CD4-positive, alpha-beta memory T cell (primary cell): ENCODE measurements at regions of chr12 and their contacts with region 1.

Region 1: DNA sequence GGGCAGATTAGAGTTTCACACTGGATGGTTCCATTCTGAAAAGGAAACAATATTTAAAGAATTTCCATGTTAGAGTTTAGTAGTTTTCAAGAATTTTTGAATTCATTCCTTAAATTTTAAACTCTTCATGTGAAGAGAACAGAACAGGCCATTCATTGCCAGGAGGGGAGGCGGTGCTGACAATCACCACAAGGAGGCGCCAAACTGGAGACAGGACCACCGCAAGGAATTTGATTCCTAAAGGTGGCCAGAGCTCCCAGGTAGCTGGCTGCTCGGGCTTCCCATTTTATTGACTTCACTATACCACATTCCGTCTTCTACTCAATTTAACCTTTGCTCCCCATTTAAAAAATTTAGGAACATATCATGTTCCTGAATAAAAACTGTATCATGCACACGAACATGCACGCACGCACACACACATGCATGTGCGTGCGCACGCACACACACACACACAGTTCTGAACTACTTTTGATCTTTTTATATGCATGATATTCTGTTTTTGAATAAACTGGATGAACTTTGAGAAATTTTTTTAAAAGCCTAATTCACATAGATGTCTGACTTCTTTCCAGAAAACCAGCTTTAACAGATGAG is 101.2 kb downstream of the NELL2 start:
- DNase-seq: peak; percentile 44 to 54 (median 44)
- H3K4me3 ChIP-seq: no peak overlapping the region
- H3K4me3 Mint-ChIP-seq: no peak overlapping the region
- H3K27ac ChIP-seq: no peak overlapping the region
- H3K27ac Mint-ChIP-seq: peak overlapping the region in 2 of 7 donors; percentile 20 to 74
- H3K4me1 ChIP-seq: no peaks in the 10 kb centered on the region
- H3K4me1 Mint-ChIP-seq: peaks cover 0 to 4% (median 2%) of the 10 kb centered on the region in 4 donors
- H3K27me3 ChIP-seq: no peaks in the 10 kb centered on the region
- H3K27me3 Mint-ChIP-seq: no peaks in the 10 kb centered on the region

Region 2: DNA sequence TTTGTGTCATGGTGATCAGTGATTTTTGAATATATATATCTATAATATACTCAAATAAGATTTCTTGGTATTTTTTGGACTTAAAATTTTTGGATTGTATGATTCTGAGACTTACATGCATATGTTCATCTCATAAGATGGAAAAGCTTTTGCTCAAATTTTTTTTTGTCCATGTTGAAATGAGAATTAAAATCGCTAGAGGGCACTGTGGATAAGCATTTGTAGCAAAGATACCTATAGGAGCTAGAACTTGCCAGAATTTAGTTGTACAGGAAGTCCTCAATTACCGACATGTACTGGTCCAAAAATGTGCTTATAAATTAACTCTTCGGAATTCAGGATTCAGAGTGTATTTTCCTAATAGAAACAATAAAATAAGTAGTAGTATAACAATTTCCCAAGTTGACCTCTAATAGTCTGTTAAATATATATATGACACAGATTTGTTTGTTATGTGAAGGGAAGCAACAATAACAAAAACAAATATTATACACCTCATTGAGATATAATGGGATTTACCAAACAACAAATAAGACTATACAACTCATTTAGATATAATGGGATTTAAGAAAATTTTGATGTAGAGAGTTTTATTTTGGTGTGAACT is 759.5 kb before region 1 on chr12:
- CTCF ChIA-PET with region 1: interaction called, 3 read pairs
- POLR2A ChIA-PET with region 1: no interaction called
- intact Hi-C with region 1: loop called (anchors 10 kb)
- DNase-seq: peak in 4 of 5 donors; percentile 39 to 46 (median 41)
- H3K4me3 ChIP-seq: no peak overlapping the region
- H3K4me3 Mint-ChIP-seq: no peak overlapping the region
- H3K27ac ChIP-seq: no peak overlapping the region
- H3K27ac Mint-ChIP-seq: no peak overlapping the region
- H3K4me1 ChIP-seq: no peaks in the 10 kb centered on the region
- H3K4me1 Mint-ChIP-seq: peaks cover 0 to 2% (median under 1%) of the 10 kb centered on the region in 4 donors
- H3K27me3 ChIP-seq: no peaks in the 10 kb centered on the region
- H3K27me3 Mint-ChIP-seq: no peaks in the 10 kb centered on the region